MCF 10A (cell line): ENCODE measurements at regions of chr11 and their contacts with region 1.

Region 1: GRCh38 chr11:47355283-47356128 is 3.0 kb upstream of the MYBPC3 start:
- DNase-seq: peak; percentile 94
- H3K4me3 Mint-ChIP-seq: no peak overlapping the region
- H3K27ac Mint-ChIP-seq: no peak overlapping the region
- H3K4me1 Mint-ChIP-seq: peaks cover 5% of the 10 kb centered on the region
- H3K27me3 Mint-ChIP-seq: no peaks in the 10 kb centered on the region
- CTCF ChIP-seq: peak; percentile 99

Region 2: DNA sequence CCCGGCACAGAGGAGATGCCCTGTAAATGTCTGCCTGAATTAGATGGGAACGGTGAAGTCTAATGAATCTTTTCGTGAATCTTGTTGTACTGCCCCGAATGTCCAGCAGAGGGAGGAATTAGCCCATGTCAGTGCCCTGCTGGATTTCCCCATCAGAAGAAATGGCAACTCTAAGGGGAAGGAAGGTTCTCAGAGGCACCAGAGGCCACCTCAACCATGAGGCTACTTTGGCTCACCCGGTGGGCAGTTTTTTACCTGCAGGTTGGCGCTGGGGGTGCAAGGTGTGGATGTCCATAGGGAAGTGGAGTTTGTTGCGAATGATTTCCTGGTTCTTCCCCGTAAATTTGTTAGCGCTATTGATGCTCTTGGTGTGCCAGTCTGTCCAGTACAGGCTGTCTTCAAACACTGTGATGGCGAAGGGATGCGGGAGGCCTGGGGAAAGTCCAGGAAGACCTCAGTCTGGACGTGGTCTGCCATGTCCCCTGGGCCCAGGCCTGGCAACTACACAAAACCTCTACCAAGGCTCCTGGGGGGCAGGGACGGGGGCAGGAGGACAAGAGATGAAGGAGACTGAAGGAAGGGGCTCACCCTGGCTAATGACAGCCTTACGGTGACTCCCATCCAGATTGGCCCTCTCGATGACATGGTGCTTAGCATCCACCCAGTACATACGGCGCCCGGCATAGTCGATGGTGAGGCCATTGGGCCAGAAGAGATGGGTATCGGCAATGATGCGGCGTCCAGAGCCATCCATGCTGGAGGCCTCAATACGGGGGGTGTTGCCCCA is 465.6 kb before region 1 on chr11:
- CTCF ChIA-PET with region 1: interaction called, 3 read pairs
- POLR2A ChIA-PET with region 1: no interaction called
- intact Hi-C with region 1: loop called (anchors 1 kb)
- DNase-seq: peak; percentile 82
- H3K4me3 Mint-ChIP-seq: no peak overlapping the region
- H3K27ac Mint-ChIP-seq: no peak overlapping the region
- H3K4me1 Mint-ChIP-seq: no peaks in the 10 kb centered on the region
- H3K27me3 Mint-ChIP-seq: no peaks in the 10 kb centered on the region
- CTCF ChIP-seq: peak; percentile 72

Region 3: DNA sequence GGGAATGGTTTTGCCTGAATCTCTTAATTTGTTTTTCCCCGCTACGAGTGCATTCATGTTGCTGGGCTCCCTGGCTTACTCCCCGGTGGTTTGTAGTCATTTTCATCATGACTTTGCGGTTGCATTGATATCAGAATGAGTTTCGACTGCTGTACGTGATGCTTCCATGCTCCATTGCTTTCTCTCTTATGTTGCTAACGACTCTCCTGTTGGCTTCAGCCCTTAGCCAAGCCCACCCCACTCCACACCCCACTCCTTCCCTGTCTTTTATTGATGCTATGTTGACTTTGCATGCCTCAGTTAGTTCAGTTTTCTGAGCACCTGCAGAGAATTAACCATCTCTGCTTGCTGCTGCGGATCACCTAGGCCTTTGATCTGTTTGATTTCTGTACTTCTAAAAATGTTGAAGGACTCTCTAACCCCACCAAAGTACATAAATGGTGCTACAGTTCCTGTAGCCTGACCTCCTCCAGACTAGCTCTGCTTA is 244.1 kb before region 1 on chr11:
- CTCF ChIA-PET with region 1: no interaction called
- POLR2A ChIA-PET with region 1: no interaction called
- intact Hi-C with region 1: no loop called
- DNase-seq: no peak
- H3K4me3 Mint-ChIP-seq: no peak overlapping the region
- H3K27ac Mint-ChIP-seq: no peak overlapping the region
- H3K4me1 Mint-ChIP-seq: no peaks in the 10 kb centered on the region
- H3K27me3 Mint-ChIP-seq: no peaks in the 10 kb centered on the region
- CTCF ChIP-seq: no peak

Region 4: DNA sequence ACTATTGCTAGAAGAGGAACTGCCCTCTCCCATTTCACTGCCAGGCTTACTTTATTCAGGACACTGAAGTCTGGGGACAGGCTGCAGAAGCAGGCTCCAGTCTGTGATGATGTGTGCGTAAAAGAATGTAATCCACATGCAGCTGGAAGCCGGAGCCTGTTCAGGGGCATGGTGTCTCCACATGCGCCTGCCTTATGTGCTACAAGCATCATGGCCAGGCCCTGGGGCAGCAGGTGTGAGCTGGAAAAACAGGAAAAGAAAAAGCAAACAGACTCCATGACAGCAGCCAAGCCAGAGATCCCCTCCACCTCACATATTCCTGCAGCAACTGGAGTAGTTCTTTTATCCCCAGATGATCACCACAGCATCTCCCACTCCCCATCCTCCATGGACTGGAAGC is 212.2 kb before region 1 on chr11:
- CTCF ChIA-PET with region 1: no interaction called
- POLR2A ChIA-PET with region 1: no interaction called
- intact Hi-C with region 1: no loop called
- DNase-seq: no peak
- H3K4me3 Mint-ChIP-seq: no peak overlapping the region
- H3K27ac Mint-ChIP-seq: no peak overlapping the region
- H3K4me1 Mint-ChIP-seq: peaks cover 12% of the 10 kb centered on the region
- H3K27me3 Mint-ChIP-seq: no peaks in the 10 kb centered on the region
- CTCF ChIP-seq: no peak

Region 5: GRCh38 chr11:47259178-47259977 is 96.1 kb before region 1 on chr11:
- CTCF ChIA-PET with region 1: interaction called, 6 read pairs
- POLR2A ChIA-PET with region 1: no interaction called
- intact Hi-C with region 1: loop called (anchors 2 kb)
- DNase-seq: peak; percentile 47
- H3K4me3 Mint-ChIP-seq: no peak overlapping the region
- H3K27ac Mint-ChIP-seq: no peak overlapping the region
- H3K4me1 Mint-ChIP-seq: peaks cover 24% of the 10 kb centered on the region
- H3K27me3 Mint-ChIP-seq: no peaks in the 10 kb centered on the region
- CTCF ChIP-seq: peak; percentile 40

Region 6: DNA sequence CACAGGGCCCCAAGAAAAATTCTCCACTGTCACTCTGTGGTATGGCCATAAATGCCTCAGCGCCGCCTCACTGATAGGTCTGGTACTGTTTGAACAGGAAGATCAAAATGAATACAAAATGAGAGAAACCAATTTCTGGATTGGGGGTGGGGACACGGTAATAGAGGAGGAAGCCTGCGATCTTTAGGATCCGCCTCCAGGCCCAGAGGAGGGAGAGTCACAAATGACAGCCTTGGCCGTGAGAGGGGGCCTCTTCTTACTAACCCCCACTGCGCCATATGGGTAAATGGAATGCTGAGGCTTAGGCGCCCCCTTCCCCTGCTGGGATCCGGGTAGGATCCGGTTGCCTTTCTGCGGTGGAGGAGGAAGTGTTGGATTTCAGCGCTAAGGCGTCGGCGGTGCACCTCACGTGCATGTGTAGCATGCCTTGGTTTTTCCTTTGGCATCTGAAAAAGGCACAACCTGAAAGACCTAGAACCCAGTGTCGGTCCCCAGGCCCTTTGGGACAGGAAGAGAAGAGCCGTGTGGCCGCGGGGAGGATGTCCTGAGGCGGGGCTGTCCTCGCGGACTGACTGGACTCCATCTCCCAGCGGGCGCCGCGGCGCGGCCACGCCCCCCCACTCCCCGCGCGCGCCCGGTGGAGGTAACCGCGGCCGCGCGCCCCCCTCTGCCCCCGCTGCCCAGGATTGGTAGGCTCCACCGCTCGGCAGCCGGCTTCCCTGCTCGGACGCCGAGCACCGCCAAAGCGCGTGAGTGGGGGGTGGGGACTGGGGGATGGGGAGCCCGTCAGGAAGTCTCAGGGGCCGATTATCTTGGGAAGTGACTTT is 86.3 kb before region 1 on chr11:
- CTCF ChIA-PET with region 1: interaction called, 6 read pairs
- POLR2A ChIA-PET with region 1: no interaction called
- intact Hi-C with region 1: loop called (anchors 5 kb)
- DNase-seq: peak; percentile 84
- H3K4me3 Mint-ChIP-seq: peak overlapping the region; percentile 85
- H3K27ac Mint-ChIP-seq: peak overlapping the region; percentile 78
- H3K4me1 Mint-ChIP-seq: peaks cover 16% of the 10 kb centered on the region
- H3K27me3 Mint-ChIP-seq: no peaks in the 10 kb centered on the region
- CTCF ChIP-seq: no peak

Region 7: GRCh38 chr11:47305734-47306483 is 49.6 kb before region 1 on chr11:
- CTCF ChIA-PET with region 1: interaction called, 17 read pairs
- POLR2A ChIA-PET with region 1: no interaction called
- intact Hi-C with region 1: no loop called
- DNase-seq: peak; percentile 19
- H3K4me3 Mint-ChIP-seq: no peak overlapping the region
- H3K27ac Mint-ChIP-seq: peak overlapping the region; percentile 12
- H3K4me1 Mint-ChIP-seq: no peaks in the 10 kb centered on the region
- H3K27me3 Mint-ChIP-seq: no peaks in the 10 kb centered on the region
- CTCF ChIP-seq: no peak